Transverse colon (tissue), 4 donors: ENCODE measurements at regions of chr10 and their contacts with region 1.

Region 1: DNA sequence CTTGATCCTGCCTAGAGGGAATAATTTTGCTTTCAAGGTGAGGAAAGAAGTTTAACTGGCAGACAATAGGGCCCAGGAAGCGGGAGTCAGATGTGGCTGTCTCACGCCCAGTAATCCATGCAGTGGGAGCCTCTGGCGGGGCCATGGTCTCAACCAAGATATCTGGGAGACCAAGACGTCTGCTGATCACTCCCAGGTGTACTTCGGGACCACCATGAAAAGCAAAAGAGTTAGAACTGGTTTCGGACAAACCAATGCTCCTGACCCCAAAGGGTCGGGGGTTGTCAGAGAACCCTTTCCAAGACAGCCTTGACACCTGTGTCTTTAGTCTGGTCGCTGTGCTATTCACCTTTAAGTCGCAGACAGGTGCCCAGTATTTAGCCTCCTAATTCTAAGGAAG is 256.9 kb upstream of the MBL2 start:
- DNase-seq: no peak
- H3K4me3 ChIP-seq: no peak overlapping the region
- H3K27ac ChIP-seq: no peak overlapping the region
- H3K4me1 ChIP-seq: peaks cover 0 to 23% (median 3%) of the 10 kb centered on the region in 4 donors
- H3K27me3 ChIP-seq: no peaks in the 10 kb centered on the region
- CTCF ChIP-seq: no peak
- EP300 ChIP-seq: no peak
- POLR2A ChIP-seq: no peak

Region 2: GRCh38 chr10:53045315-53045714 is 15.9 kb after region 1 on chr10:
- in situ Hi-C with region 1: no loop called
- intact Hi-C with region 1: loop called (anchors 2 kb)
- DNase-seq: no peak
- H3K4me3 ChIP-seq: no peak overlapping the region
- H3K27ac ChIP-seq: no peak overlapping the region
- H3K4me1 ChIP-seq: peaks cover 0 to 7% (median 0%) of the 10 kb centered on the region in 4 donors
- H3K27me3 ChIP-seq: no peaks in the 10 kb centered on the region
- CTCF ChIP-seq: no peak
- EP300 ChIP-seq: no peak
- POLR2A ChIP-seq: no peak